Left cardiac atrium (tissue), 4 donors: ENCODE measurements at regions of chr18 and their contacts with region 1.

Region 1: GRCh38 chr18:5456577-5457463 is 87.0 kb downstream of the EPB41L3 start:
- DNase-seq: peak; percentile 27
- ATAC-seq: peak; percentile 80 to 92

Region 2: GRCh38 chr18:4994710-4995109 is 462.1 kb before region 1 on chr18:
- intact Hi-C with region 1: no loop called
- DNase-seq: no peak
- ATAC-seq: no peak

Region 3: GRCh38 chr18:5250603-5251002 is 206.2 kb before region 1 on chr18:
- intact Hi-C with region 1: no loop called
- DNase-seq: no peak
- ATAC-seq: no peak

Region 4: GRCh38 chr18:5546660-5547059 is 89.8 kb after region 1 on chr18:
- intact Hi-C with region 1: loop called in 1 of 2 experiments (anchors 5 kb)
- DNase-seq: no peak
- ATAC-seq: peak; percentile 35 to 58